Naive thymus-derived CD4-positive, alpha-beta T cell (primary cell): ENCODE measurements at regions of chr5 and their contacts with region 1.

Region 1: DNA sequence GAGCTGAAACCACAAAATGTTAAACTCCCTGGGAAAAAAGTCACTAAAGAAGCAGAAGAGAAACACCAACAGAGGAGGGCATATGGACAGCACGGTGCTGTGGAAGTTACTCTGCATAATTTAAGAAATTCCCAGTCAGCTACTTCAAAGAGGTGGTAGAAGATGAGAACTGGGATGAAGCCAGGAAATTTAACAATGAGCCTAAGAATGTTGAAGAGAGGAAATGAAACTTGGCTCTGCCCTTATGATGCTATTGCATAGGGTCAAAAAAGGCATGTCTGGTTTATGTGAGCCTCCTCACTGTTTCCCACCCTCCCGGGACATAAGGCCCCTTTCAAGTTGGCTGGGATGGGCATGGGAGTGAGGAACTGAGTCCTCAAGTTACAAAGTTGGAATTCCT is 25.4 kb upstream of the SNX18 start:
- DNase-seq: no peak
- ATAC-seq: no peak
- H3K4me3 ChIP-seq: no peak overlapping the region
- H3K4me3 Mint-ChIP-seq: no peak overlapping the region
- H3K27ac ChIP-seq: no peak overlapping the region
- H3K27ac Mint-ChIP-seq: no peak overlapping the region
- H3K4me1 ChIP-seq: no peaks in the 10 kb centered on the region
- H3K4me1 Mint-ChIP-seq: no peaks in the 10 kb centered on the region
- H3K27me3 ChIP-seq: no peaks in the 10 kb centered on the region
- H3K27me3 Mint-ChIP-seq: peaks cover 0 to 19% (median 4%) of the 10 kb centered on the region in 5 donors

Region 2: DNA sequence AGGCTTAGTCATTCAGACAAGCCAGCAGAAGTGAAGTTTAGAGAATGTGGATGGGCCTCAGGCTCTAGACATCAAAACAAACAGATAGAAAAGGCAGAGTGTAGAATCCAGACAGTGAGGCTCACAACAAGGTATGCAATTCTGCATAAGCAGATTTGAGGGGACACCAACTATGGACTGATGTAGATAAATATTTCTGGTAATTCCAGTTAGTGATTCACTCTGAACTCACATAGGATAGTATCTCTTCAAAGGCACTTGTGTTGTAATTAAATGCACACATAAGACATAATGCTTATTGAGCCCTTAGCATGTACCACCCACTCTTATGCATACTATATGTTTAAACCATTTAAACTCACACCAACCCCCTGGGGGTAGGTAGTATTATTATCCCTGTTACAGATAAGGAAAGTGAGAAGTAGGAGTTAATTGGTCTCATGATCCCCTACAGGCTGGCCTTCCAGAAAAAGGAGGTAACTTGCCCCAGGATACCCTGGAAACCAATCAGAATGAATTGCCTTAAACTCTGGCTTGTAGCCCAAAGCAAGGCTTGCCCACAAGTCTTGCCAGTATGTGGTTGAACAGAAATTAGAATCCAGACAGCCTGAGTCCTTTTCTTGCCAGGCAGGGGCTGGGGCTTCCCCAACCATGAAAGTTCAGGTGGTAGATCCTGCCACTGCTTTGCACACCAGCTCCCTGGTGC is 76.1 kb before region 1 on chr5:
- CTCF ChIA-PET with region 1: no interaction called
- POLR2A ChIA-PET with region 1: no interaction called
- intact Hi-C with region 1: loop called (anchors 1 to 5 kb)
- DNase-seq: no peak
- ATAC-seq: no peak
- H3K4me3 ChIP-seq: no peak overlapping the region
- H3K4me3 Mint-ChIP-seq: no peak overlapping the region
- H3K27ac ChIP-seq: no peak overlapping the region
- H3K27ac Mint-ChIP-seq: no peak overlapping the region
- H3K4me1 ChIP-seq: no peaks in the 10 kb centered on the region
- H3K4me1 Mint-ChIP-seq: peaks cover 0 to 1% (median 0%) of the 10 kb centered on the region in 7 donors
- H3K27me3 ChIP-seq: no peaks in the 10 kb centered on the region
- H3K27me3 Mint-ChIP-seq: peaks cover 4 to 32% (median 10%) of the 10 kb centered on the region in 5 donors

Region 3: GRCh38 chr5:54443270-54443669 is 48.9 kb before region 1 on chr5:
- CTCF ChIA-PET with region 1: interaction called, 4 read pairs
- POLR2A ChIA-PET with region 1: no interaction called
- intact Hi-C with region 1: loop called in 1 of 2 experiments (anchors 1 kb)
- DNase-seq: no peak
- ATAC-seq: no peak
- H3K4me3 ChIP-seq: no peak overlapping the region
- H3K4me3 Mint-ChIP-seq: no peak overlapping the region
- H3K27ac ChIP-seq: no peak overlapping the region
- H3K27ac Mint-ChIP-seq: peak overlapping the region in 1 of 9 donors; percentile 22
- H3K4me1 ChIP-seq: peaks cover 0 to 18% of the 10 kb centered on the region in 2 donors
- H3K4me1 Mint-ChIP-seq: peaks cover 9 to 39% (median 36%) of the 10 kb centered on the region in 7 donors
- H3K27me3 ChIP-seq: no peaks in the 10 kb centered on the region
- H3K27me3 Mint-ChIP-seq: peaks cover 0 to 3% (median 0%) of the 10 kb centered on the region in 5 donors

Region 4: GRCh38 chr5:54785729-54786591 is 293.8 kb after region 1 on chr5:
- CTCF ChIA-PET with region 1: no interaction called
- POLR2A ChIA-PET with region 1: no interaction called
- intact Hi-C with region 1: no loop called
- DNase-seq: no peak
- ATAC-seq: peak; percentile 75
- H3K4me3 ChIP-seq: no peak overlapping the region
- H3K4me3 Mint-ChIP-seq: no peak overlapping the region
- H3K27ac ChIP-seq: no peak overlapping the region
- H3K27ac Mint-ChIP-seq: no peak overlapping the region
- H3K4me1 ChIP-seq: no peaks in the 10 kb centered on the region
- H3K4me1 Mint-ChIP-seq: peaks cover 0 to 4% (median 0%) of the 10 kb centered on the region in 7 donors
- H3K27me3 ChIP-seq: no peaks in the 10 kb centered on the region
- H3K27me3 Mint-ChIP-seq: peaks cover 0 to 22% (median 0%) of the 10 kb centered on the region in 5 donors

Region 5: GRCh38 chr5:54895816-54896341 is 403.7 kb after region 1 on chr5:
- CTCF ChIA-PET with region 1: no interaction called
- POLR2A ChIA-PET with region 1: no interaction called
- intact Hi-C with region 1: no loop called
- DNase-seq: no peak
- ATAC-seq: peak; percentile 57
- H3K4me3 ChIP-seq: no peak overlapping the region
- H3K4me3 Mint-ChIP-seq: peak overlapping the region in 8 of 10 donors; percentile 20 to 77 (median 66)
- H3K27ac ChIP-seq: no peak overlapping the region
- H3K27ac Mint-ChIP-seq: peak overlapping the region in 4 of 9 donors; percentile 2 to 52 (median 38)
- H3K4me1 ChIP-seq: no peaks in the 10 kb centered on the region
- H3K4me1 Mint-ChIP-seq: peaks cover 1 to 6% (median 5%) of the 10 kb centered on the region in 7 donors
- H3K27me3 ChIP-seq: no peaks in the 10 kb centered on the region
- H3K27me3 Mint-ChIP-seq: peaks cover 17 to 81% (median 27%) of the 10 kb centered on the region in 5 donors